ENCODE measurements at regions of chr7 and their contacts with region 1.

Region 1: DNA sequence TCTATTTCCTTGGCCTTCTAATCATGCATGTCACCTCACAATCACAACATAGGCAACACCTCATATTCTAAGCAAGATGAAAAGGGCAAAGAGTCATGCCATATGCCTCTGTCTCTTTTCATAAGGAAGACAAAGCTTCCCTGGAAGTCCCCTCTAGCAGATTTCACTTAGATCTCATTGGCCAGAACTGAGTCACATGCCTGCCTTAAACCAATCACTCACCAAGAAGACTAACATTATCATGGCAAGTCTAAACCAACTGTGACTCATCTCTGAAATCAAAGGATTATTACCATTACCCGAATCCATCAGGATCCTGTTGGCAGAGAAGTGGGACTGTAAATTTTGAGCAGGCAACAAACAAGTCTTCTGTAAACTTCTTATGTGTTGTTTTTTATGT is 27.8 kb downstream of the CAV1 start:
- DNase-seq: peak; percentile 76
- ATAC-seq: peak; percentile 55
- H3K4me3 ChIP-seq: no peak overlapping the region
- H3K27ac ChIP-seq: peak overlapping the region; percentile 86; the same call in 1 of the 2 replicates
- H3K4me1 ChIP-seq: peaks cover 21% of the 10 kb centered on the region
- H3K27me3 ChIP-seq: no peaks in the 10 kb centered on the region
- CTCF ChIP-seq: no peak
- POLR2A ChIP-seq: no peak
- RAD21 ChIP-seq: no peak

Region 2: DNA sequence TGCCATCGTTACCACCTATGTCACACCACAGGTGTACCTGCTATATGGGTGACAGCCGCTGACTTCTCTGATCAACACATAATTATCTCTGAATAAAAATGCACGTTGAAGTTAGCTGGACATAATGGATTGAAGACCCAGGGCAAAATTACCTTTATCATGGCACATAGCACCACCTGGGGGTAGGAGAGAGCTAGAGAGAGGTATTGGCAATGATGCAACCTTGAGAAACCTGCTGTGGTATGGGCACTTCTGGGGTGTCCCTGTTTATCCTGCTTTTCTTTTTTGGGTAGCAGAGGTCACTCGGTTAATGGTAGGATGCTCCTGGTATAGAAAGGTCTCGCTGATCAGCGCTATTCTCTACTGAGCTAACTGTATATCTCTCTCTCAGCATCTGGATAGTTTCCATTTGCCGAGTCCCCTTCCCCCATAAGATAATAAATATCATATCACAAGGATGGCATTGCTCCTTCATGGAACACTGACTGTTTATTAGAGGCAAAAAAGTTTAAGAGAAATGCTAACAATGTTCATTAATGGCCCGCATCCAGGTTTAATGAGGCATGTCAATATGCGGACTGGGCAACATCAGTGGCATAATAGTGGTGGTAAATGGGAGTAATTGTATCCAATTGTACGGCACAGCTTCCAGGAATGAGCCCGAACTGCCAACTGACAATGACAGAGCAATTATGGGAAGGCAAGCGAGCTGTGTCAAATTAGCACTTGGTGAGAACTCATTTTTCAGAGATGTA is 845.2 kb before region 1 on chr7:
- CTCF ChIA-PET with region 1: no interaction called
- POLR2A ChIA-PET with region 1: no interaction called
- dilution Hi-C with region 1: no loop called
- in situ Hi-C with region 1: no loop called
- intact Hi-C with region 1: no loop called
- DNase-seq: peak; percentile 5
- ATAC-seq: no peak
- H3K4me3 ChIP-seq: no peak overlapping the region
- H3K27ac ChIP-seq: no peak overlapping the region
- H3K4me1 ChIP-seq: no peaks in the 10 kb centered on the region
- H3K27me3 ChIP-seq: no peaks in the 10 kb centered on the region
- CTCF ChIP-seq: 0 out of 2 replicates have a peak, but pooled peaks have one; percentile 17
- POLR2A ChIP-seq: no peak
- RAD21 ChIP-seq: peak; percentile 38; the same call in 1 of the 2 replicates

Region 3: DNA sequence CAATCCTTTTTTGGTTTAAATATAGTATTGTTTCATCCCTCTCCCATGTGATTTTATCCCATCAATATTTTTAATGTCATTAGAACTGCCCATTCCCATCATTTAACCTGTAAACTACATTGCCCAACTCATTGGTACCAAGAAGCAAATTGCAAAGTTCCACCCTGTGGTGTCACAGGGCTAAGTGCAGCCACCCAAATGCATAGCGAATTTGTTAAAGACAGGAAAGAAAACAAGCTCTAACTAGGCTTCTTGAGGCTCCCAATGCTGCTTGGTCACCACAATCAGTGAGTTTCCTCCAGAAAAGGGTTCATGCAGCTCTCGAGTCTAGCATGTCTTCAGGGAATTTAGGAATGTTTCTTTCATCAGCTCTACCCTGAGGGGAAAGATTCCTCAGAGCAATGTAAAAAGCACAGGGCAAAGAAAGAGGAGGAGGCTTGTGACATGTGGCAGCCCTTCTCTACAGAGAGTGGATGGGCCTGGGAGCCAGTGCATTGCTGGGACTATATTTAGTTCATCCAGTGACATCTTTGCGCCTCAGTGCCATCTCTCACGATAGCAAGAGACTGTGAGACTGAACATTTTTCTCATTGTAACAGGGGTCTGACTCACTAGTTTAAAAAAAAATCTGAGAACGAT is 30.3 kb after region 1 on chr7:
- CTCF ChIA-PET with region 1: interaction called, 3 read pairs
- POLR2A ChIA-PET with region 1: no interaction called
- dilution Hi-C with region 1: no loop called
- in situ Hi-C with region 1: no loop called
- intact Hi-C with region 1: loop called (anchors 2 kb)
- DNase-seq: peak; percentile 80
- ATAC-seq: peak; percentile 85
- H3K4me3 ChIP-seq: no peak overlapping the region
- H3K27ac ChIP-seq: peak overlapping the region; percentile 67
- H3K4me1 ChIP-seq: peaks cover 16% of the 10 kb centered on the region
- H3K27me3 ChIP-seq: no peaks in the 10 kb centered on the region
- CTCF ChIP-seq: no peak
- POLR2A ChIP-seq: no peak
- RAD21 ChIP-seq: no peak